Heart left ventricle (tissue), 16 donors: ENCODE measurements at regions of chr10 and their contacts with region 1.

Region 1: GRCh38 chr10:79195091-79195923 is 126.5 kb downstream of the ZMIZ1 start:
- DNase-seq: peak; percentile 85 to 93 (median 90)
- ATAC-seq: peak; percentile 72 to 85 (median 77)
- H3K4me3 ChIP-seq: peak overlapping the region in 1 of 12 donors; percentile 1
- H3K27ac ChIP-seq: peak overlapping the region in 11 of 12 donors; percentile 41 to 78 (median 70)
- H3K4me1 ChIP-seq: peaks cover 0 to 65% (median 46%) of the 10 kb centered on the region in 12 donors
- H3K27me3 ChIP-seq: no peaks in the 10 kb centered on the region
- CTCF ChIP-seq: peak; percentile 90 to 99 (median 97)
- POLR2A ChIP-seq: no peak

Region 2: DNA sequence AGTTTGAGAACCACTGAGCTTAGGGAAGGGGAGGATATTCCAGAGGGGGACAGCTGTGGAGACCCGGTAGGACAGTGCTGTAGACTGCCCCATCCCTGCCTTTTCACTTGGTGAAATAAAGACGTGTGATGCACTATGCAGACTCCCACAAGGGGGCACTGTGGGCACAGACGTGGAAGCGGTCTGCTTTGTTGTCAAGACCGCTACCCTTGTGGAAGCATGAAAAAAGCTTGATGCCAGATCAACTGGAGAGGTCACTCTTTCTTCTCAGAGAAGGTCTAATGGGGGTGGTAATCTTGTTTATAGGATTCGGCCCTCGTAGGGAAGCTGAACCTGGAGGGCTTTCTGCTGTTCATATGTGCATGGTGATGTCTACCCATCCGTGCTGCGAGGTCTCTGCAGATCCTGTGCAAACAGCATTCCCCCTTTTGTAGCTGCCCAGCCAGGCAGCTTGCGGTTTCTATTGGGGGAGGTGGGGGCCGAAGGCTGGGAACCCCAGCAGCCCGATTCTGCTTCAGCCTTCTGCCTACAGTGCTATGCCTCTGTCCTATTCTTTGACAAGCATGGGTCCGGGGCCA is 1147.9 kb before region 1 on chr10:
- intact Hi-C with region 1: loop called (anchors 1 to 5 kb)
- DNase-seq: peak; percentile 84 to 93 (median 86)
- ATAC-seq: peak; percentile 55 to 81 (median 78)
- H3K4me3 ChIP-seq: no peak overlapping the region
- H3K27ac ChIP-seq: no peak overlapping the region
- H3K4me1 ChIP-seq: peaks cover 0 to 23% (median 8%) of the 10 kb centered on the region in 12 donors
- H3K27me3 ChIP-seq: no peaks in the 10 kb centered on the region
- CTCF ChIP-seq: peak; percentile 85 to 95 (median 88)
- POLR2A ChIP-seq: no peak

Region 3: GRCh38 chr10:78579995-78580394 is 615.3 kb before region 1 on chr10:
- intact Hi-C with region 1: loop called in 1 of 10 experiments (anchors 10 kb)
- DNase-seq: peak; percentile 71 to 82 (median 80)
- ATAC-seq: peak; percentile 65 to 85 (median 80)
- H3K4me3 ChIP-seq: no peak overlapping the region
- H3K27ac ChIP-seq: peak overlapping the region in 3 of 12 donors; percentile 3 to 50 (median 27)
- H3K4me1 ChIP-seq: peaks cover 0 to 38% (median 26%) of the 10 kb centered on the region in 12 donors
- H3K27me3 ChIP-seq: no peaks in the 10 kb centered on the region
- CTCF ChIP-seq: no peak
- POLR2A ChIP-seq: no peak

Region 4: GRCh38 chr10:78664929-78665553 is 530.3 kb before region 1 on chr10:
- intact Hi-C with region 1: loop called in 2 of 10 experiments (anchors 10 kb)
- DNase-seq: no peak
- ATAC-seq: no peak
- H3K4me3 ChIP-seq: no peak overlapping the region
- H3K27ac ChIP-seq: no peak overlapping the region
- H3K4me1 ChIP-seq: no peaks in the 10 kb centered on the region
- H3K27me3 ChIP-seq: no peaks in the 10 kb centered on the region
- CTCF ChIP-seq: peak; percentile 17 to 56 (median 40)
- POLR2A ChIP-seq: no peak

Region 5: DNA sequence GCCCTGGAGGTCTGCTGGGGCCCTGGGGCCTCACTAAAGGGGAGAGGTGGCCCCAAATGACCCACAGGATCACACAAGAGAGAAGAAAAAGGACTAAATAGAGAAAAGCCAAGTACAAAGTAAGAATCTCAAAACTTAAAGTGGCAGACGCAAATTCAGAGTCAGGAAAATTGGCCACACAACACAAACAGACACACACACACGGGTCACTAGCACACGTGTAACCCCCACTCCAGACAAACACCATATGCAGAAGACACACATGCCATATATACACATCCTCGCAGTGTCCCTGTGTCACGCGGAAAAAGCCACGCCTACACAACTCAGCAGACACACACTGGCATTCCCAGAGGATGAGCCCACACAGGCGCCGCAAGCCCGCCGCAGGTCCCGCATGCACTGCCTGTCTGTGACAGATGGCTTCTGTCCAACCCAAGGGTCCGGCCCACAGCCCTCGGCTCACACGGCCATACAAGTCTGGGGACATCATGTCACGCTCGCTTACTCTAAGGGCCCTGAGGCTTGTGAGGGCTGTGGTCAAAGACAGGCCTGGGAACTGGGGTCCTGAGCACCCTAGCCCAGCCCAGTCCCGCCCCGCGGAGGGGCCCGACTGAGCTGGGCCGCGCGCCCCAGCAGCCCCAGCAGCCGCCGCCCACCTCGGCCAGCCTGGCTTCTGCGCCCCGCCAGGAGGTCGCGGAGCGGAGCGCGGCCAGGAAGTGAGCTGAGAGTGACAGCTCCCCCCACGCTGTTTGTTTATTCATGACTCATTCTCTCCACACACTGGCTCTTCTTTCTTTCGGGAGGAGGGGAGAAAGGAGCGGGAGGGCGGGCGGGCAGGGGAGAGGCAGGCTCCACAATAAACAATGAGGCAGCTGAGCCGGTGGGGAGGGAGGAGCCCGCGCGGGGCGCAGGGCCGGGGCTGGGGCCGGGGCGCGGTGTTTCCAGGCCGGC is 222.1 kb before region 1 on chr10:
- intact Hi-C with region 1: loop called in 6 of 10 experiments (anchors 5 to 10 kb)
- DNase-seq: peak; percentile 86 to 91 (median 89)
- ATAC-seq: peak; percentile 45 to 80 (median 72)
- H3K4me3 ChIP-seq: peak overlapping the region; percentile 11 to 66 (median 54)
- H3K27ac ChIP-seq: peak overlapping the region; percentile 91 to 100 (median 98)
- H3K4me1 ChIP-seq: peaks cover 5 to 45% (median 30%) of the 10 kb centered on the region in 12 donors
- H3K27me3 ChIP-seq: no peaks in the 10 kb centered on the region
- CTCF ChIP-seq: no peak
- POLR2A ChIP-seq: peak in 1 of 2 donors; percentile 73

Region 6: DNA sequence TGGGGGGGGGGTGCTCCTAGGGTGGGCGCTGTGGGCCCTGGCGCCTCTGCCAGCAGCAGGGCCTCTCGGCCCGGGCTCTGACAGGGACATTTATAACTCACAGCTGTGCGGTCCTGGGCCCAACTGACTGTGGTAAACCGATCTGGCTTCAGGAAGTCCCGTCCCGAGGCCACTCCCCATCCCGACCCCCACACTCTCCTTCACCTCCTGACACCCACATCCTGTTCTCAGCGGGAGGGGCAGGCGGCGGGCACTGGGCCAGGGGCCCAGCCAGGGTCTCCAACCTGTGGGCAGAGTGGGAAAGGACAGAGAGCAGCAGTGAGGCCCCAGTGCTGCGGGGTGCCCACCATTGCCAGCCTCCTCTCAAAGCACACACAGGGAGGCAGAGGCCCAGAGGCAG is 57.5 kb before region 1 on chr10:
- intact Hi-C with region 1: loop called in 1 of 10 experiments (anchors 10 kb)
- DNase-seq: peak in 3 of 5 donors; percentile 58 to 68 (median 63)
- ATAC-seq: peak in 3 of 4 donors; percentile 8 to 31 (median 18)
- H3K4me3 ChIP-seq: peak overlapping the region in 2 of 12 donors; percentile 21
- H3K27ac ChIP-seq: peak overlapping the region; percentile 80 to 97 (median 89)
- H3K4me1 ChIP-seq: peaks cover 51 to 100% (median 98%) of the 10 kb centered on the region in 12 donors
- H3K27me3 ChIP-seq: no peaks in the 10 kb centered on the region
- CTCF ChIP-seq: no peak
- POLR2A ChIP-seq: no peak